Adrenal gland (tissue), 19 donors: ENCODE measurements at regions of chr12 and their contacts with region 1.

Region 1: DNA sequence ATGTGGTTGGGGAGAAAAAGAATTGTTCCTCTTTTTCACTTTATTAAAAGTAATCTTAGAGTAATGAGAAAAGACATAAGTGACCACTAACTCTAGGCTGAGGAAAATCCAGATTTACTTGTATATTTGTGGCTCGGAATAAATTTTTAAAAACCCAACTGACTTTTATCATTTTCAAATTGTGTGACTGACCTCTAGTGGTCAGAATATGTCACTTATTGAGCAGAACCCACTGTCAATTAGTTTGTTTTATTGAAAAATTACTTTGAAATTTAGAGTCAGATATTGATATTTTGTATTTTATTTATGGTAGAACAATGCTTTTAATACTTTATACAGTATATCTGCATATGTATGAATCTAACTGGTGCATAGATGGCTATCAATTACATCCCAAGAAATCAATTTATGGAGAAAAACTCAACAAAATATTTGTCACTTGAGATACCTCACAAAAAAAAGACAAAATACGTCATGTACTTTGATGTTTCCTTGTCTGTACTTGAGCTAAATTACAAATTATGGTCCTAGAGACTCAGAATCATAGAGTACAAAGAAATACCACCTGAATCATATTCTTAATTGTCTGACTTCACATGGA is 229.4 kb downstream of the CNTN1 start:
- DNase-seq: no peak
- H3K4me3 ChIP-seq: no peak overlapping the region
- H3K27ac ChIP-seq: no peak overlapping the region
- H3K4me1 ChIP-seq: no peaks in the 10 kb centered on the region
- H3K27me3 ChIP-seq: no peaks in the 10 kb centered on the region
- CTCF ChIP-seq: peak; percentile 39 to 81 (median 66)
- POLR2A ChIP-seq: no peak

Region 2: DNA sequence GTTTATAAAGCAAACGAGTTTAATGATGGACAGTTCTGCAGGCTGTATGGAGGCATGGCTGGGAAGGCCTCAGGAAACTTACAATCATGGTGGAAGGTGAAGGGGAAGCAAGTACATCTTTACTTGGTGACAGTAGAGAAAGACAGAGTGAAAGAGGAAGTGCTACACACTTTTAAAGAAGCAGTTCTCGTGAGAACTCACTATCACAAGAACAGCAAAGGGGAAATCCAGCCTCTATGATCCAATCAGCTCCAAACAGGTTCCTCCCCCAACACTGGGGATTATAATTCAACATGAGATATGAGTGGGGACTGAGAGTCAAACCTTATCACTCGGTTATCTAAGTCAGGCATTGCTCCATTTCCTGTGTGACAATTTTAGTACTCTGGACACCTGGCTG is 419.3 kb before region 1 on chr12:
- intact Hi-C with region 1: no loop called
- DNase-seq: no peak
- H3K4me3 ChIP-seq: no peak overlapping the region
- H3K27ac ChIP-seq: no peak overlapping the region
- H3K4me1 ChIP-seq: no peaks in the 10 kb centered on the region
- H3K27me3 ChIP-seq: no peaks in the 10 kb centered on the region
- CTCF ChIP-seq: no peak
- POLR2A ChIP-seq: no peak

Region 3: GRCh38 chr12:40622246-40622838 is 299.3 kb before region 1 on chr12:
- intact Hi-C with region 1: loop called (anchors 5 kb)
- DNase-seq: peak; percentile 37 to 89 (median 75)
- H3K4me3 ChIP-seq: no peak overlapping the region
- H3K27ac ChIP-seq: no peak overlapping the region
- H3K4me1 ChIP-seq: peaks cover 0 to 3% of the 10 kb centered on the region in 2 donors
- H3K27me3 ChIP-seq: no peaks in the 10 kb centered on the region
- CTCF ChIP-seq: peak; percentile 51 to 80 (median 69)
- POLR2A ChIP-seq: no peak